ENCODE measurements at regions of chr1 and their contacts with region 1.

Region 1: DNA sequence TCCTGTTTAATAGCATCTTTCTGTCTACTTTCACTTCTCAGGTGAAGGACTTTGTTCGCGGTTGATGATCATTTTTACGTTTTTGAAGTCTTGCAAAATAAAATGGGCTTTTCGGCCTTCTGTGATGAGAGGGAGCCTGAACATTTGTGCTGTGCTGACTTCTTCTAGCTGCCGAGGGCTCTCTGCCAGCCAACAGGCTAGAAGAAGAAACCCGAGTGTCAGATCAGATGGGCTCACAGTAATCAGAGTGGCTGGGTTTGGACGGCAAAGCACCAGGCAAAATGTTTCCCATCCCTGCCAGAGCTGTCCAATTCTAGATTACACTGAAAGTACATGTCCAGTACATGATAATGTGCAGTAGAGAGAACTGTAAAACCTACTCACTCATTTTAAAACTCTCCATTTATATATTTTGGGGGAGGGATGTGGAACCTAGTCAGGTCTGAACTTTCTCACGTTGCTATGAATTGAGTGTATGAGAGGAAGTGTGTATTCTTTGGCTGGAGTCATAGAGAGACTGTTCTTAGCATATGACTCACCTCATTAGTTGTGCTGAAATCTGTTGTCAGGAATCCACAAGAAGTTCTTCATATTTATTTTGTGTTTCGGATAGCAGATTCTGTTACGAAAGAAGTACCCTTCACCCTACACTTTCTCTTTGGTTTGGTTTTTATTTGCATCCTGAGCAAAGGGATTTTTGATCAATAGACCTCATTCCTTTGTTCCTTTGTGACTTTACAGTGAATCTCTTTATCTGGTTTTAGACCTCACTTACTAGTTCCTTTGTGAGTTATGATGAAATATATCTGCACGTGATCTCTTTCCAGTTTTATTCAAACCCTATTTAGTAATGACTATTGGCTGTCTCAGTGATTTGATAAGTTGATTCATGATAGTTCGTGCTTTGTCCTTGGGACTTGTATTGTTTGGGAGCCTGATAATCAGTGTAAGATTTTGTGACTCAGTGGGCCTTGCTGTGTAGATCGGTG is 4.8 kb downstream of the ATP1A1 start:
- DNase-seq: peak in 1 of 2 donors; percentile 76
- ATAC-seq: peak; percentile 15 to 69 (median 49)
- H3K4me3 ChIP-seq: no peak overlapping the region
- H3K4me3 Mint-ChIP-seq: peak overlapping the region; percentile 52
- H3K27ac ChIP-seq: peak overlapping the region; percentile 71
- H3K27ac Mint-ChIP-seq: peak overlapping the region; percentile 58 to 93
- H3K4me1 ChIP-seq: peaks cover 40% of the 10 kb centered on the region
- H3K4me1 Mint-ChIP-seq: peaks cover 75 to 85% of the 10 kb centered on the region in 2 donors
- H3K27me3 ChIP-seq: no peaks in the 10 kb centered on the region
- H3K27me3 Mint-ChIP-seq: no peaks in the 10 kb centered on the region
- CTCF ChIP-seq: no peak

Region 2: GRCh38 chr1:116418091-116418830 is 40.4 kb after region 1 on chr1:
- intact Hi-C with region 1: loop called (anchors 1 kb)
- DNase-seq: peak; percentile 82 to 93
- ATAC-seq: peak; percentile 93 to 97 (median 95)
- H3K4me3 ChIP-seq: peak overlapping the region; percentile 58
- H3K4me3 Mint-ChIP-seq: peak overlapping the region; percentile 85
- H3K27ac ChIP-seq: peak overlapping the region; percentile 54
- H3K27ac Mint-ChIP-seq: peak overlapping the region; percentile 84 to 86
- H3K4me1 ChIP-seq: peaks cover 20% of the 10 kb centered on the region
- H3K4me1 Mint-ChIP-seq: peaks cover 22 to 37% of the 10 kb centered on the region in 2 donors
- H3K27me3 ChIP-seq: no peaks in the 10 kb centered on the region
- H3K27me3 Mint-ChIP-seq: peaks cover 0 to 2% of the 10 kb centered on the region in 2 donors
- CTCF ChIP-seq: no peak